GM13976 (cell line): ENCODE measurements at regions of chr7 and their contacts with region 1.

Region 1: GRCh38 chr7:99918959-99919813 is at the start of gene TRIM4:
- DNase-seq: peak; percentile 96
- CTCF ChIP-seq: no peak

Region 2: GRCh38 chr7:99984593-99984992 is 65.4 kb after region 1 on chr7:
- in situ Hi-C with region 1: loop called (anchors 10 kb)
- DNase-seq: no peak
- CTCF ChIP-seq: no peak

Region 3: GRCh38 chr7:100015232-100016209 is 96.3 kb after region 1 on chr7 and contains the start of gene ZKSCAN1:
- in situ Hi-C with region 1: no loop called
- DNase-seq: peak; percentile 97
- CTCF ChIP-seq: no peak